Activated CD4-positive, alpha-beta memory T cell treated with anti-CD3 and anti-CD28 coated beads, Interleukin-2, amount 10 ng/mL, durations not matched to agents 7 days and 5 days (primary cell): ENCODE measurements at regions of chr1 and their contacts with region 1.

Region 1: DNA sequence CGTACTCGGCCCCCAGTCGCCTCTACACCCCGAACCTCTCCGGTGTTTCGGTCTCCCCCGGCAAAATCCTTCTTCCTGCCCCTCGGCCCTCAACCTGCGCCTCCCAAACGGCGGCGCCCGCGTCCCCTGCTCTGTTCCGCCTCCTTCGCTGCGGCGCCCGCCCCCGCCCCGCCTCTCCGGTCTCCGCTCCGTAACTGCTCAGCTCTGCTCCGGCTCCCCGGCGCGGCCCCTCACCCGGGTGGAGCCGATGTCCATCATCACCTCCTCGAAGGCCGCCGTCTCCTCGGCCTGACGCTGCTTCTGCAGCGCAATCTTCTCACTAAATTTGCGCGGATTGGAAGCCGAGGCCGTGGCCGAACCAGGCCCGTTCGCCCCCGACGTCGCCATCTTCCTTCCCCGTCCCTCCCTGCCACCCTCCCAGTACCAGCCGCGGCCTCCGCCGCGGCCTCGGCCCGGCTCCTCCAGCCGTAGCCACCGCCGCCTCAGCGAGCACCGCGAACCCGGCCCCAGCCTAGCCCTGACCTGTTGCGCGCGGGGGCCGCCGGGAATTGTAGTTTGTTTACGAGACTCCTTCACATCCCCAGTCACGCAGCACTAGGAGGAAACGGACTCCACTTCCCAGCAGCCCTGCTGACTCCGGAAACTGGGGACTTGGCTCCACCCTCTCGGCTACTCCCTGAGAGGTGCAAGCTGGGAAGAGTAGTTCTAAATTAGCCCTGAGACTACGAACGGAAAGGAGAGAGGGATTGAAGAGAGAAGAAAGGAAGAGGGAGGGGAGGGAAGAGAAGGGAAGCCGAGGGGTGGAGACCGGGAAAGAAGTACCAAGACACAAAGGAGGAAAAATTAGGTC is at the start of gene CRTC2:
- DNase-seq: peak; percentile 99
- H3K4me3 Mint-ChIP-seq: peak within 1 kb of the TSS; percentile 96
- H3K27ac Mint-ChIP-seq: peak within 1 kb of the TSS; percentile 95
- H3K4me1 Mint-ChIP-seq: peaks cover 60% of the 10 kb centered on the region
- H3K27me3 Mint-ChIP-seq: no peaks in the 10 kb centered on the region
- total RNA-seq, gene CRTC2: 107 TPM

Region 2: GRCh38 chr1:153977250-153978240 is 19.2 kb after region 1 on chr1 and contains the start of gene JTB:
- CTCF ChIA-PET with region 1: interaction called, 11 read pairs
- POLR2A ChIA-PET with region 1: interaction called, 32 read pairs
- DNase-seq: peak; percentile 89
- H3K4me3 Mint-ChIP-seq: peak within 1 kb of the TSS; percentile 97
- H3K27ac Mint-ChIP-seq: peak within 1 kb of the TSS; percentile 89
- H3K4me1 Mint-ChIP-seq: peaks cover 49% of the 10 kb centered on the region
- H3K27me3 Mint-ChIP-seq: no peaks in the 10 kb centered on the region
- total RNA-seq, gene JTB: 120 to 127 TPM